Dendritic cell treated with granulocyte-macrophage colony-stimulating factor and Interleukin-4, amounts not matched to agents 40 ng/mL and 50 ng/mL, for 4 days (primary cell): ENCODE measurements at regions of chr10 and their contacts with region 1.

Region 1: DNA sequence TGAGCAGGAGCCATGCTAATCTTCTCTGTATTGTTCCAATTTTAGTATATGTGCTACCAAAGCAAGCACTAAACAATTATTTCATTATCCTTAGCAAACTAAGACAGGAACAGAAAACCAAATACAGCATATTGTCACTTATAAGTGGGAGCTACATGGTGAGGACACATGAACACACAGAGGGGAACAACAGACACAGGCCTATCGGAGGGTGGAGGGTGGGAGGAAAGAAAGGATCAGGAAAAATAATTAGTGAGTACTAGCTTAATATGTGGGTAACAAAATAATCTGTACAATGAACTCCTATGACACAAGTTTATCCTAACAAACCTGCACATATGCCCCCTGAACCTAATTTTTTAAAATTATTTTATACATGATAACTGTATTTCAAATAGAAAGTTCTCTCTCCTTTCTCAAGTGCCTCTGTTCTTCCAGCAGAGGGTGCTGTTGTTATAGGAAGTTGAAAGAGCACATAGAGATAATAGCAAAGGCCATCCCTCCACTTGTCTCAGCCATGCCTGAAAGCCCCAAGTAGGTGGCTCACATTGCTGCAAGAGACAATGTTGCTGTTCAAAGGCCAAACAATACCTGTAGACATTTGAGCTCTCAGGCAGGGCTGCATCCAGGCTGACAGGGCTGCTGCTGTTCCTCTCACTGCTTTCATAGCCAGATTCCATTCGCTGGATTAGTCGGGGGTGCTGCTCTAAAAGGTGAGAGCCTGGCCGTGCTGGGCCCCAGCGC is 33.4 kb upstream of the PPP3CB start:
- H3K4me3 Mint-ChIP-seq: no peak overlapping the region
- H3K27ac Mint-ChIP-seq: no peak overlapping the region
- H3K4me1 Mint-ChIP-seq: no peaks in the 10 kb centered on the region
- H3K27me3 Mint-ChIP-seq: no peaks in the 10 kb centered on the region

Region 2: DNA sequence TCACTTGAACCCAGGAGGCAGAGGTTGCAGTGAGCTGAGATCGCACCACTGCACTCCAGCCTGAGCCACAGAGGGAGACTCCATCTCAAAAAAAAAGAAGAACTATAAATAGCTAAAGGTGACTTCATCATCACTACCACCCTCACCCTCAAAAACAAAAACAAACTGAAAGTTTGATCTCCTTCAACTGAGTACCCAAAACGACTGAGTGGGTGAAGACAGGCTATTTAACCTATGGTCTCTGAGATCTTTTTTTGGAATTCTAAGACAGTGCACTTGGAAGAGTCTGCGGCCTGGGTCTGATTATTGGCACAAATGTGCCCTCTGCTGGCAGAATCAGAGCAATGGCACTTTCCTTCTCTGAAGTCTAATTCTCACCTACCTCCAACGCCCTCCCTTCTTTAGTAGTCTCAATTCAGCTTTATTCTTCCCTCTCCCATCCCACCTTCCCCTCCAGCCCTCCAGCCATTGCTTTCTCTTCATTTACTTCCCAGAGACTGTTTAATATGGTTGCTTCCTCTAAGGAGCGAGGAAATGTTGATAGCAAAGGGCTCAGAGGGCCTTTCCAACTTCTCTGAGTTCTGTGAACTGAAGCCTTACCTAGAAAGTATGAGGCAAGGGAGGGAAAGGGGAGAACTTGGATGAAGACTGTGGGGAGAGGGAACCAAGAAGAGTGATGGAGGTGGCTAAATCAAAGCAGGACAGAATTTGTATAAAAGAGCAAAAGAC is 114.9 kb after region 1 on chr10:
- intact Hi-C with region 1: loop called (anchors 1 kb)
- H3K4me3 Mint-ChIP-seq: no peak overlapping the region
- H3K27ac Mint-ChIP-seq: no peak overlapping the region
- H3K4me1 Mint-ChIP-seq: peaks cover 44% of the 10 kb centered on the region
- H3K27me3 Mint-ChIP-seq: peaks cover 23% of the 10 kb centered on the region